GM13976 (cell line): ENCODE measurements at regions of chr2 and their contacts with region 1.

Region 1: DNA sequence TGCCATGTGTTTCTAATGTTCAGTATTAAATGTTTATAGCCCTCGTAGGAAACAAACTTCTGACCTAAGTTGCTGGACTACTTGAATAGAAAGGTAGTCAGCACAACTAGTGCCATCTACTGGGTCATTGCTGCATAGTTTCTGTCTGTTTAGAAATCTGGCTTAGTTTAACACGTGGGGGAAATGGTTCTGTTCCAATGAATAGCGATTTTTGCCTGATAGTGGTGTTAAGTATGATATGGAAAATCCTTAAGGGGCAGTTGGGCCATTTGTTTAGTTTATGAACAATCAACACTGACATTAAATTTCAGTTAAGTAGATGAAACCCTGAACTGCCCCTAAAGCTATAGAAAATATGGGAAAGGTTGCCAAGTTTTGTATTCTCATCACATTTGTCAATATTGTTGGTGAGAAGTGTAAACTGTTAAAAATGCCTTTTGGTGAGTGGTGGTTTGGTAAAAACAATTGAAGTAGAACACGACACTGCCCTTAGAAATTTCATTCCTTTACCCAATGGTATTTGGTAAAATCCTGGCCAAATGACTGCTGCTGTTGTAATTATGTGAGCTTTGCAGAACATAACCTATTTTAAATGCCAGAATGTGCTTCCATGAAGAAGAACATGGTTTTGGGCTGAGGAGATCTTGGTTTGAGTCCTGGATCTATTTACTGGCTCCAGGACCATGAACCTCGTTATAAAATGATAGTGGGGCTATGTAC is 13.2 kb downstream of the NABP1 start:
- DNase-seq: peak; percentile 66
- CTCF ChIP-seq: peak; percentile 51

Region 2: GRCh38 chr2:191066197-191066918 is 624.8 kb before region 1 on chr2:
- in situ Hi-C with region 1: no loop called
- DNase-seq: no peak
- CTCF ChIP-seq: no peak

Region 3: DNA sequence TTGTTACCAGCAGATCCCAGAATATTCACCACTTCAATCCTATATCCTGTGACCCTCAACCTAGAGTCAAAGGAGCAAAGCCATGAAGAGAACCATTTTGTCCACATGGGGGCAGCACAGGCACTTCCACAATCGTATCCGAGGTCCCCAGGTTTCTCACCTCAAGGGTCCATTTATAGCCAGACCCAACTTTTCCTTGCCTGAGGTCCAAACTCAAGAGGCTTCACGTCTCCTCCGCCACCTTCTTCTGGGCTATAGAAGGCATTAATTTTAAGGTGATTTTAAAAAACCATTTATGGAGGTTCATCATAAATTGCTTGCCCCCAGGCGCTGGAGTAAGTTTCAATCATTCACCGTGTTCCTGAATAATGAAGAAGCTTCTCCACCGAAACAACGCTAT is 124.8 kb before region 1 on chr2:
- in situ Hi-C with region 1: loop called (anchors 5 kb)
- DNase-seq: peak; percentile 47
- CTCF ChIP-seq: peak; percentile 64